ENCODE measurements at regions of chr5 and their contacts with region 1.

Region 1: DNA sequence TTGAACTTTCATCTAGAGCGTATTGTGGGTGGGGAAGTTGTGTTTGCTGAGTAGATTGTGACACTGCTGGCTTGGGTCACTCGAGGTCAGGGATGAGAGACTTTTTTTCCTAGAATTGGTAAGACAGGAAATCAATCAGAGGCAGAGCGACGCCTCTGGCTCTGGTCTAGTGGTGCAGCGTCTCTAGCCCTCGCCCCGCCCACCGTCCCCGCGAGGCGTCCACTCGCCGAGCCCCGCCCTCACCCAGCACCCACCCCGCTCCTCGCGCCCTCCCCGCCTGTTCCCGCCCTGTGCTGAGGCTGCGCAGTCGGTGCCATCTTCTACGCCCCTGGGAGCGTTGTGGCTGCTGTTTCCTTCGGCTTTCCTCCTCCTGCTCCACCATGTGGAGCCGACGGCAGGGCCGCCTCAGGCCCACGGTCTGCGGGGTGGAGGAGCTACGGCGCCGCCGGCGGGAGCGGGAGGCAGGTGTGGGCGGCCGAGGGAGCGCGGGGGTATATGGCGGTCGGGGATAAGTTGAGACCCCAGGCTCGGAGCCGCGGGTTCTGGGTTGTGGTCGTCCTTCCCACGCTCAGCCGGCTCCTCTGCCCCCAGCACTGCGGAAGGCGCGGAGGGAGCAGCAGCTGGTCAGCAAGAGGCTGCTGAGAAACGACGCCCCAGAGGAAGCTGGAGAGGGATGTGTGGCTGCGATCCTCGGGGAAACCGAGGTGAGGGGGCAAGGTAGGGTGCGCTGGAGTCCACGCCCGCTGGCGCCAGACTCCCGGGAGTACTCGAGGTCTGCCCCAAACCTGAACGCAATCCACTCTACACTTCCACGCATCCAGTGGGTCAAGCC is at the start of gene TMCO6:
- DNase-seq: peak; percentile 98 to 99 (median 99)
- H3K4me3 ChIP-seq: peak within 1 kb of the TSS in 3 of 4 donors; percentile 23 to 94 (median 39)
- H3K27ac ChIP-seq: peak within 1 kb of the TSS; percentile 68 to 96 (median 89)
- H3K4me1 ChIP-seq: peaks cover 13 to 18% of the 10 kb centered on the region in 2 donors
- H3K27me3 ChIP-seq: no peaks in the 10 kb centered on the region
- CTCF ChIP-seq: peak; percentile 30 to 61 (median 56)
- POLR2A ChIP-seq: peak in 1 of 2 donors; percentile 80
- total RNA-seq, gene TMCO6: 6.6 to 348 (median 29.5) TPM

Region 2: DNA sequence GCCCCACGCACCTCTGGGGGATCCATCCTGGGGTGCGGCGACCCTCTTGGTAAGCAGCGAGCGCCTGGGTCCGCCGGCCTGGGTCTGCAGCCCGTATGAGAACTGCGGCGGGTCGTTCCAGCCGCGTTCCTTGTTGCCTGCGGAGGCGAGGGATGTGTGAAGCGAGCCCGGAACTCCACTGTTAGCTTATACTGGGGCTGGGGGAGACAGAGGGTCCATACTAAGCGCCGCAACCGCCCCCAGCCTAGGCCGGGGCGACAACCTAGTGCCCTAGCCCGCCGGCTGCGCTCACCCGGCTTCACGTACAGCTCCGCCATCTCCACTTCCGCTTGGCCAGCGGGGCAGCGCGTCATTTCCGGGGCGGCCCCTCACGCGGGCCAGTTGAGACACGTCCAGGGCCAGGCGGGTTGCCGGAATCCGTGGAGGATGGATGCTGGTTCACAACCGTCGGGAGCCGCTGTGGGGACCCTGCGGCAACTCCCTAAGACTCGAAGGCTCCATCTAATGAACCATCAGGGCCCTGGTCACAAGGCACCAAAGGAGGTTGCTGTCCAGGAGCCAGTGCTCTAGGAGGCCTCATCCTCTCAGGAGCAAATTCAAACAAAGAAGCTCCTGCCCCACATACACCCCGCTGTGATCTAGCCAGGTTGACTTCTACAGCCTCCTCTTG is 82.1 kb before region 1 on chr5 and contains the start of gene SRA1:
- intact Hi-C with region 1: loop called in 1 of 2 experiments (anchors 5 kb)
- DNase-seq: peak; percentile 92 to 96 (median 95)
- H3K4me3 ChIP-seq: peak within 1 kb of the TSS; percentile 71 to 93 (median 86)
- H3K27ac ChIP-seq: peak within 1 kb of the TSS; percentile 92 to 95 (median 93)
- H3K4me1 ChIP-seq: peaks cover 26 to 51% of the 10 kb centered on the region in 2 donors
- H3K27me3 ChIP-seq: no peaks in the 10 kb centered on the region
- CTCF ChIP-seq: no peak
- POLR2A ChIP-seq: peak; percentile 93 to 98
- total RNA-seq, gene SRA1: 31.3 to 156 (median 46.0) TPM

Region 3: DNA sequence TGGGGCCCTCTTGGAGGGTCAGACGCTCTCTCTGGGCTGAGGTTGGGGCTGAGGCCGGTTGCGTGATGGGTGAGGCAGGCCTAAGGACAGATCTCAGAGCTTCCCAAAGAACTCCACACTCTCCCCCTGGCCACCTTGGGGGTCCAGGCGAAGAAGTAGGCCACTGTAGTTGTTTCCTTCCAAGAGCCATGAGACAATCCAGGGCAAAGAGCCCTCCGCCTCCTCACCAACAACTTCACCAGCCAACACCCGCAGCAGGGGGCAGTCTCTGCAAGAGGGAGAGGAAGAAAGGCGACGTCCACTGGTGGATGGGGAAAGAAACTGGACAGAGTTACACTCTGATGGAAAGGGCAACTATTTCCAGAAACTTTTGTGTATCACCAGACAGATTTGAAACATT is 64.1 kb before region 1 on chr5:
- intact Hi-C with region 1: loop called (anchors 5 kb)
- DNase-seq: peak; percentile 67 to 87 (median 79)
- H3K4me3 ChIP-seq: no peak overlapping the region
- H3K27ac ChIP-seq: peak overlapping the region in 1 of 5 donors; percentile 80
- H3K4me1 ChIP-seq: peaks cover 5 to 34% of the 10 kb centered on the region in 2 donors
- H3K27me3 ChIP-seq: no peaks in the 10 kb centered on the region
- CTCF ChIP-seq: peak; percentile 40 to 77 (median 67)
- POLR2A ChIP-seq: no peak

Region 4: GRCh38 chr5:140690941-140691924 is 51.9 kb after region 1 on chr5 and contains the starts of genes HARS1 and HARS2:
- intact Hi-C with region 1: no loop called
- DNase-seq: peak; percentile 86 to 96 (median 93)
- H3K4me3 ChIP-seq: peak within 1 kb of the TSS; percentile 25 to 95 (median 82)
- H3K27ac ChIP-seq: peak within 1 kb of the TSS; percentile 71 to 90 (median 80)
- H3K4me1 ChIP-seq: peaks cover 22 to 33% of the 10 kb centered on the region in 2 donors
- H3K27me3 ChIP-seq: no peaks in the 10 kb centered on the region
- CTCF ChIP-seq: peak in 2 of 6 experiments; percentile 13 to 20
- POLR2A ChIP-seq: peak in 1 of 2 donors; percentile 62
- total RNA-seq, gene HARS1: 36.4 to 80.6 (median 55.7) TPM
- total RNA-seq, gene HARS2: 21.3 to 51.2 (median 32.9) TPM

Measured in adrenal gland (tissue), 19 donors.